Aorta (tissue), 5 donors: ENCODE measurements at regions of chr15 and their contacts with region 1.

Region 1: GRCh38 chr15:58490086-58490887 is 58.5 kb downstream of the LIPC start:
- DNase-seq: no peak
- ATAC-seq: no peak
- H3K4me3 ChIP-seq: no peak overlapping the region
- H3K27ac ChIP-seq: peak overlapping the region; percentile 79 to 84
- H3K4me1 ChIP-seq: no peaks in the 10 kb centered on the region
- H3K27me3 ChIP-seq: no peaks in the 10 kb centered on the region

Region 2: GRCh38 chr15:58528188-58528870 is 38.0 kb after region 1 on chr15:
- intact Hi-C with region 1: loop called in 1 of 2 experiments (anchors 5 kb)
- DNase-seq: no peak
- ATAC-seq: peak; percentile 60
- H3K4me3 ChIP-seq: no peak overlapping the region
- H3K27ac ChIP-seq: peak overlapping the region in 1 of 2 donors; percentile 69
- H3K4me1 ChIP-seq: peaks cover 0 to 4% of the 10 kb centered on the region in 2 donors
- H3K27me3 ChIP-seq: no peaks in the 10 kb centered on the region

Region 3: GRCh38 chr15:58546635-58547627 is 56.6 kb after region 1 on chr15:
- intact Hi-C with region 1: loop called in 1 of 2 experiments (anchors 1 kb)
- DNase-seq: peak; percentile 77 to 83
- ATAC-seq: peak; percentile 70
- H3K4me3 ChIP-seq: no peak overlapping the region
- H3K27ac ChIP-seq: peak overlapping the region in 1 of 2 donors; percentile 75
- H3K4me1 ChIP-seq: peaks cover 0 to 4% of the 10 kb centered on the region in 2 donors
- H3K27me3 ChIP-seq: no peaks in the 10 kb centered on the region